Right ventricle myocardium inferior (tissue), 1 donor: ENCODE measurements at regions of chr10 and their contacts with region 1.

Region 1: GRCh38 chr10:63629363-63630084 is 108.3 kb downstream of the REEP3 start:
- DNase-seq: peak; percentile 97
- ATAC-seq: peak; percentile 82

Region 2: GRCh38 chr10:63166742-63167258 is 462.7 kb before region 1 on chr10:
- intact Hi-C with region 1: loop called (anchors 2 kb)
- DNase-seq: no peak
- ATAC-seq: peak; percentile 49

Region 3: GRCh38 chr10:63268798-63269503 is 360.6 kb before region 1 on chr10:
- intact Hi-C with region 1: loop called (anchors 1 kb)
- DNase-seq: peak; percentile 79
- ATAC-seq: peak; percentile 98

Region 4: GRCh38 chr10:63521416-63522276 is 107.9 kb before region 1 on chr10:
- intact Hi-C with region 1: loop called (anchors 2 kb)
- DNase-seq: peak; percentile 91
- ATAC-seq: peak; percentile 88

Region 5: GRCh38 chr10:63664341-63665102 is 35.0 kb after region 1 on chr10:
- intact Hi-C with region 1: no loop called
- DNase-seq: no peak
- ATAC-seq: no peak

Region 6: DNA sequence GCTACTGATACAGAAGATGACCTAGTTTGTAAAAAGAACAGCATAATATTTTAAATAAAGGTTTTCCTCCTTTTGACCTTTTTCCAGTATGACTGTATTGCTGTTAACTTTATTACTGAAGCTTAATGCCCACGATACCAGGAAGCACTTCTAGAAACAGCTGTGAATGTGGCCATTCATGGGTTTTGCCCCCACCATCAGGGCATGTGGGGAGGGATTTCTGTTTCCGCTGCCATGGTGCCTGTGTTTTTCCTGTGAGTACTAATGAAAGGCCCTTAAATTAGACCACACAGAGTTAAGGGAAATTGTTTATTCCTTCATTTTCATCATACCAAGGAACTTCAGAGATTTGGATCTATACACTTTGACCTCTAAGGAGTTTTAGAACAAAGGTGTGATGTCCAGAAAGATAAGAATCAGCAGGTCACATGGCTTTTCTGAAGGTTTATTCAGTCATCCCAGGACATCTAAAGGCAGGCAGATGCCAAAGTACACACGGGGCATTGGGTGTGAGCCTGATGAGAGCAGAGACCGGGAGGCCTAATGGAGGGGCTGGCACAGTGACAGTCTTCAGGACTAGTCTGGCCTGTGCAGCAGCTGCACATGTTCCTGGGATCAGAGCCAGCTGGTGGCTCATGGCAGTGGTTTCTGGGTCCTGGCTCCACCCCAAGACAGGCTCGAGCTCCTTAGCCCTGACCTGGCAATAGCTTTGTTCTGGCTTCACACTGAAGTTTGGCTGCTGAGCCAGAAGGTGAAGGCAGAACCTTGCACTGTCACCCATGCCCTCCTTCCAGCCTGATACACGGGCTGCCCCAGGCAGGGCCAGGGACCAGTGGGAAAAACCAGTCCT is 82.6 kb after region 1 on chr10:
- intact Hi-C with region 1: loop called (anchors 1 kb)
- DNase-seq: peak; percentile 93
- ATAC-seq: peak; percentile 94

Region 7: DNA sequence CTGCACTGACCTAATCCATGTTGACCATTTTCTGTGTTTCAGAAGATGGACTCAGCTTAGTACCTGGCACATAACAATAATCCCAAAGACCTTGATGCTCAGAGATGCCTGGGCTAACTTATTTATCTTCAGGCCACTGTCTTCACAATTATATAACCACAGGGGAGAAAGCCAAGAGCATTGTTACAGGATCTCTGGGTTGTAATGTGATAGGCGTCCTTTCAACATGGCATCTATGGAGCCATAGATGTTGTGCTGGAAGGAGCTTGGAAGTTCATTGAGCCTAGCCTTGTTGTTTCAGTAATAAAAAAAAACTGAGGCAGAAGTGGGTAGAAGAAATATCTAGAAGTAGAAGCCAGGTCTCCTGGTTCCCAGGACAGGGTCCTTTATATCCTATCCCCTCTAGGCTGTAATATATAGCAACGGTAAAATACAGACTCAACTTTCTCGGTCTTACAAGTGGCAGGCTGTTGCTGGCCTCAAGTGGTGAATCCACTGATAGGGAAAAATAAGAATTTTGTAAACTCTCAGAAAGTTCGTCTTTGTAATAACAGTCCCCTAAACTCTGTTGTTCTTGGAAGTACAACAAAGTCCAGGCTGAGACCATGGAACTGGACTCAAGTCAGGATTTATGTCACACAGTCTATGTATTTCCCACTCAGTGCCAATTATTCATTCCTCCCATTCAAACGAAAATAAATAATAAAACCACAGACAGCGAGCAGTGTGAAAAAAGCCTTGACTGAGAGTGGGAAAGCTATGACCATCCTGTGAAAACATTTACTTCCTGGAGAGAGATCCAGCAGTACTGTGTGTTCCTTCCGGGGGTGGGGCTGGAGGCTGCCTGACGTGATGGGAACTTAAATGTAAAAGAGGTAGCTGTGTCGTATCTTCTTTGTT is 169.3 kb after region 1 on chr10:
- intact Hi-C with region 1: no loop called
- DNase-seq: peak; percentile 86
- ATAC-seq: peak; percentile 88